ENCODE measurements at regions of chr3 and their contacts with region 1.

Region 1: DNA sequence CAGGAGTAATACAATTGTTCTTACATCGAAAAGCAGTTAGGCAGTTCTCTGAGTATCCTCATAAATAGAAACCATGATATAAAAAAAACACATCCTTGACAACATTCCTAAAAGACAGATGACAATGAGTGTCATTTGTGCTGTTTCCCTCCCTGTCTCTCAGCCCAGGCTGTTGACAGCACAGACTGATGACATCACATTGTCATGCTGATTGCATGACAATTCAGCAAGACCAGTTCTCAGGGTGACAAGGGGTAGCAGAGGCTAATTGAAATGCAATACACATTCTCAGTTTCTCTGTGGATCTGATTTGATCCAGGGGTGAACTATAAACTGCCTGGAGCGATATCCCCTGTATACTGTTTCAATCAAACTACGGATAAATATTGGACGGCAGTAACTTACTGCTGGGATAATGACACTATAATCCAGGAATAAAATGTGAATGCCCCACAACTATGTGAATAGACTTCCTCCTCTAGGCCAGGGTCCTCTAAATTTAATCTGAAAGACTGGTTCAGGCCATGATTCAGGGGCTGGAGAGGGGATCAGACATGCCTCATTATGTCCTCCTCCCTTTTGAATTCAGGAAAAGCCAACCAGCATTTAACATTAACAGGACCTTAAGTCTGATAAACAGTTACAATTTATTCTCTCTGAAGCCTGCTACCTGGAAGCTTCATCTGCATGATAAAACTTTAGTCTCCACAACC is 16.7 kb upstream of the EIF1B start:
- DNase-seq: no peak
- ATAC-seq: peak; percentile 83

Region 2: DNA sequence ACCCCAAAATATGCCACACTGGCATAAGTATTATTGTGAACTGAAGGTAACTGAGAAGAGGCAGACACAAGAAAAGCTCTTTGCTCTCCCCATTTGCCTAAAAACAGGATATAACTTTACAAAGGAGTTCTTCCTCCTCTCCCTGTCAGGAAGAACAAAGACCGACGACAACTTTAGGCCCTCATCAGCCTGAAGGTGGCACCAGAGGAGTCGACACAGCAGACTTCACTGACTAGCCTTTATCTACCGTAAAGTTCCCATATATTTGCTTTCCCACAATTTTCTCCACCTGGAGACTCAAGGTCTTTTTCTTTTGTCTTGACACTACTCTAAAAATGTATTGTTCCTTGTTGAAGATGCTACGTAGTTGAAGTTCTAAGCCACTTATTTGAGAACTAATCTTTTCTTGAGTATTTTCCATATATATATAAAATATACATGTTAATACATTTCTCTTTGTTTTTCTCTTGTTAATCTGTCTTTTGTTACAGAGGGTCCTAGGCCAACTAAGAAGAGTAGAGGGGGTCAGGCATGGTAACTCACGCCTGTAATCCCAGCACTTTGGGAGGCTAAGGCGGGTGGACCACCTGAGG is 1084.2 kb before region 1 on chr3:
- intact Hi-C with region 1: no loop called
- DNase-seq: peak; percentile 68
- ATAC-seq: peak; percentile 81

Region 3: DNA sequence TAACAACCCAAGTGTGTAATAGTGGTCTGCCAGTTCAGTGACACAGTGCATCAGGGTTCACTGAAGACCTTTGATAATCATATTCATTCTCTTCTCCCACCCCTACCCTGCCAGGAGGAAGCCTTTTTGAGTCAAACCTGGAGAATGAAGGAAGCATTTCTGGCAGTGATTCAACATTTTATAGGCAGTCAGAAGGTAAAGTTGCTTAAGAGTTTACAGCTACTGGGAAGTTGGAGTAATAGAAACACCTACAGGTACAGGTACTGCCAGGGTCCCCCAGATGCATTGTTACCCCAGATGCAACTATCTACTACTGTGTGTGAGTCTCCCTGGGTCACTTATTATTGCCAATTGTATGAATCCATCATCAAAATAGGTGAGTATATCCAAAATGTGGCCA is 130.2 kb before region 1 on chr3:
- intact Hi-C with region 1: no loop called
- DNase-seq: no peak
- ATAC-seq: no peak

Region 4: GRCh38 chr3:40247714-40248454 is 44.9 kb before region 1 on chr3:
- intact Hi-C with region 1: loop called (anchors 5 kb)
- DNase-seq: no peak
- ATAC-seq: no peak

Region 5: GRCh38 chr3:40321818-40322217 is 29.0 kb after region 1 on chr3:
- intact Hi-C with region 1: no loop called
- DNase-seq: no peak
- ATAC-seq: no peak

Region 6: GRCh38 chr3:40580494-40581091 is 287.8 kb after region 1 on chr3:
- intact Hi-C with region 1: no loop called
- DNase-seq: no peak
- ATAC-seq: no peak